ENCODE measurements at regions of chr17 and their contacts with region 1.

Region 1: DNA sequence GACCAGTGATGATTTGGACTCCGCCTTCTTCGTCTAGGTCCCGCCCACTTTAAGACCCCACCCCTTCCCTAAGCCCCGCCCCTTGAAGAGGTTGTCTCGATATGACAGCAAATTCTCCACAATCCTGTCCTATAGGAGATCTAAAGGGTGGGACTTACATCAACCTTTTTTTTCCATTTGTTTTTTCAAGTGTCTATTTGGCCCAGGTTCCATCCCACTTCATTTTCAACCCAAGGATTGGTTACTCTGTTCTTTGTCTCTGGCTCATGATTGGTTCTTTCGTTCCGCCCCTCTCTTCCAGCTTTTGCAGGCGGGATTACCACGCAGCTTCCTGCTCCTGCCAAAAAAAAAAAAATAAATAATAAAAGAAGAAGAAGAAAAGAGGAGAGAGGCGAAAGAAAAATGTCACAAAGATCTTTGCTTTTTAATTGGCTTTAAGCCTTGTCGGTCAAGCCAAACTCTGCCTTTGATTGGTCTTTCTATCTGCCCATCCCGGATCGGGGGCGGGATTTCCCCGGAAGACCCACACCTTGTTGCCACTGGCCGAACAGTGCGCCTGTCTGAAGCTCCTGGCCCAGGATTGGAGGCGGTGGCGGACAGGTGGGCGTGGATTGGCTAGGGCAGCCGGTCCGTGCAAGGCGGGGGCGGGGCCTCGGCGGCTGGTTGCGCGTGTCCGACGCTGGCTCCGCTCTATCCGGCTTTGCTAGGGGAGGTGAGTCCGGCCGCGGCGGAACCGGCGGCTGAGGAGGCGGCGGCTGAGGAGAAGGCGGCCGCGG is 1.2 kb upstream of the NLK start:
- DNase-seq: peak; percentile 100
- H3K4me3 Mint-ChIP-seq: peak overlapping the region; percentile 80
- H3K27ac Mint-ChIP-seq: peak overlapping the region; percentile 76
- H3K4me1 Mint-ChIP-seq: peaks cover 48% of the 10 kb centered on the region
- H3K27me3 Mint-ChIP-seq: peaks cover 9% of the 10 kb centered on the region

Region 2: DNA sequence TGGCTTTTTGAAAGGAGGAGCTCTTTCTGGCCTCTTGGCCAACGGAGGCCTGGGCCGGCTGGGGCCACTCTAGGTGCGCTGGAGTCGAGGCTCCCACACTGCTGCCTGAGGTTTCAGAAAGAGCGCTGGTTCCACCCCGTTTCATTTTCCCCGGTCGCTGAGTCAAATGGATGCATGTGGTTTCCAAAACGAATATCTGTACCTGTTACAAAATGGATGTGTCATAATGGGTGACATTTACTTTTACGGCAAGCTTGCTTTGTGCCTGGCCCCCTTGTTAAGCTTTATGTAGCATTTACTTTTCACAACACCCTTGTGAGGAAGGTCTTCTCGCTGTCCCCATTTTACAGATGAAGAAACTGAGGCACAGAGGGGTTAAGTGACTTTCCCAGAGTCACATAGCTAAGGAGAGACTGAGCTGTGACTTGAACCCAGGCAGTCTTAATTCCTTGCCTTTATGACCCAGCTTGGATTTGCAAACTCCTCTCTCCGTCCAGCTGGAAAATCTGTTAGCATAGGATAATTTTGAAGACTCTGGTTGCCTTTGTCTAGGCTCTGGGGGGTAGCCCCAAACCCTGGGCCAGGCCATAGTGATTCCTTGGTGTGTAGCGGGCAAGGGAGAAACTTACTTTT is 574.4 kb before region 1 on chr17:
- intact Hi-C with region 1: loop called (anchors 10 kb)
- DNase-seq: peak; percentile 77
- H3K4me3 Mint-ChIP-seq: peak overlapping the region; percentile 55
- H3K27ac Mint-ChIP-seq: peak overlapping the region; percentile 86
- H3K4me1 Mint-ChIP-seq: peaks cover 81% of the 10 kb centered on the region
- H3K27me3 Mint-ChIP-seq: no peaks in the 10 kb centered on the region

Region 3: DNA sequence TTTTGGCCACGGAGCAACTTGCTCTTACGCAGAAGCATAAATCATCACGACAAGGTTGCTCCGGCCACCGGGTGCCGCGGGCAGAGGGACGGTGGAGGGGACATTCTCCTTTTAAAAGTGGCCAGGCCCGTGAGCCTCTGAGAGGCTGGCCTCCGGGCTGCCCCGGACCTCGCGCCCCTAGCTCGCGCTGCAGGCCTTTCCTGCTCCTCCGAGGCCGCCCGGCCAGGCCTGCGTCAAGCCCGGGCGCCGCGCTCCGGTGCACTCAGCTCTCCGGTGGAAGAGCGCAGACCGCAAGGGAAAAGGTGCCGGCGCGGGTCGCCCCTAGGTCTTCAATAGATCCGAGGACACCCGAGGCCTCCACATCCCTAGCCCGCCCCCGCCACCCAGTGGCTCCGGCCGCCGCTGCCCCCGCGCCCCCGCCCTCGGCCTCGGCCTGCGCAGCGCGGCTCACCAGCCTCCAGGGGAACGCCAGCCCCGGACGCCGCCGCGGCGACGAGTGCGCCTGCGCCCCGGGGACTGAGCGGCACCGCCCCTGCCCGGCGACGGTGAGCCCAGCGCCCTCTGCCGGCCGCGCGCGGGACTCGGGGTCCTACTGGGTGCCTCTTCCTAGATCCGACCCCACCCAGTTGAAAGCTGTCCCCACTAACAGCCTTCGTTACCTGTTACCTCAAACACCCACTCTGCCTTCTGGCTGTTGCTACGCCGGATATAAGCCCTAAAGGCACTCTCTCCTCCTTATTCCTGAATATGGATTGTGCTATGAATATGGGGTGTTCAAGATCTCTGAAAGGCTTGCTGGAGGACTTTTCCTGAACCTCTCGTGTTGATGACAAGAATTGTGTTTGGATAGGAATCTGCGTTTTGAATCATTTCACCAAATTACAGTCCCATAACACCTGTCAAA is 148.1 kb before region 1 on chr17 and contains the start of gene LYRM9:
- intact Hi-C with region 1: loop called (anchors 5 kb)
- DNase-seq: peak; percentile 89
- H3K4me3 Mint-ChIP-seq: peak within 1 kb of the TSS; percentile 83
- H3K27ac Mint-ChIP-seq: peak within 1 kb of the TSS; percentile 66
- H3K4me1 Mint-ChIP-seq: peaks cover 22% of the 10 kb centered on the region
- H3K27me3 Mint-ChIP-seq: peaks cover 27% of the 10 kb centered on the region
- total RNA-seq, gene LYRM9: 3.0 and 3.1 TPM in 2 replicates

Region 4: GRCh38 chr17:28018439-28019070 is 22.7 kb before region 1 on chr17:
- intact Hi-C with region 1: no loop called
- DNase-seq: no peak
- H3K4me3 Mint-ChIP-seq: no peak overlapping the region
- H3K27ac Mint-ChIP-seq: no peak overlapping the region
- H3K4me1 Mint-ChIP-seq: no peaks in the 10 kb centered on the region
- H3K27me3 Mint-ChIP-seq: peaks cover 9% of the 10 kb centered on the region

Region 5: GRCh38 chr17:28078341-28079229 is 37.3 kb after region 1 on chr17:
- intact Hi-C with region 1: loop called (anchors 2 kb)
- DNase-seq: no peak
- H3K4me3 Mint-ChIP-seq: no peak overlapping the region
- H3K27ac Mint-ChIP-seq: no peak overlapping the region
- H3K4me1 Mint-ChIP-seq: peaks cover 21% of the 10 kb centered on the region
- H3K27me3 Mint-ChIP-seq: no peaks in the 10 kb centered on the region

Region 6: DNA sequence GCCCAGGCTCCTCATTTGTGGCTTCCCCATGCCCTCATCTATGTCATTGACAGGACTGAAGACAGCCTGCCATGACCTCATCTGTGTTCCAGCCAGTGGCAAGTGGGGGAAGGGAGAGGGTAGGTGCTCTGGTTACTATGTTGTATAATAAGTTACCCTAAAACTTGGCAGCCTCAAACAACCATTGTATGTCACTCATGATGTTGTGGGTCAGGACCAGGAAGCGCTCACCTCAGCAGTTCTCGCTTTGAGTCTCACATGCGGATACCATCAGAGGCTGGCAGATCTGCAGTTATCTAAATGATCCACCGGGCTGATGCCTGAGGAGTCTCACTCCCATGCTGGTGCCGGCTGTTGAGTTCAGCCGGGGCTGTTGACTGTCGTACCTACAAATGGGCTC is 188.8 kb after region 1 on chr17:
- intact Hi-C with region 1: loop called (anchors 10 kb)
- DNase-seq: peak; percentile 20
- H3K4me3 Mint-ChIP-seq: no peak overlapping the region
- H3K27ac Mint-ChIP-seq: no peak overlapping the region
- H3K4me1 Mint-ChIP-seq: peaks cover 12% of the 10 kb centered on the region
- H3K27me3 Mint-ChIP-seq: peaks cover 53% of the 10 kb centered on the region

Measured in activated T-helper 2 cell treated with anti-CD3 and anti-CD28 coated beads, Interferon-gamma antibody, Interleukin-2, Interleukin-4, amounts not matched to agents 10 μg/mL and 5 μg/mL and 100 μg/mL, durations not matched to agents 14 hours and 24 hours and 36 hours (primary cell).